Prostate gland (tissue), 2 donors: ENCODE measurements at regions of chr11 and their contacts with region 1.

Region 1: GRCh38 chr11:12288212-12288930 is 89.0 kb upstream of the PARVA start:
- DNase-seq: peak; percentile 62
- H3K4me3 ChIP-seq: no peak overlapping the region
- H3K27ac ChIP-seq: peak overlapping the region; percentile 0 to 43
- H3K4me1 ChIP-seq: no peaks in the 10 kb centered on the region
- H3K27me3 ChIP-seq: no peaks in the 10 kb centered on the region
- CTCF ChIP-seq: peak; percentile 63 to 80 (median 70)
- POLR2A ChIP-seq: no peak

Region 2: DNA sequence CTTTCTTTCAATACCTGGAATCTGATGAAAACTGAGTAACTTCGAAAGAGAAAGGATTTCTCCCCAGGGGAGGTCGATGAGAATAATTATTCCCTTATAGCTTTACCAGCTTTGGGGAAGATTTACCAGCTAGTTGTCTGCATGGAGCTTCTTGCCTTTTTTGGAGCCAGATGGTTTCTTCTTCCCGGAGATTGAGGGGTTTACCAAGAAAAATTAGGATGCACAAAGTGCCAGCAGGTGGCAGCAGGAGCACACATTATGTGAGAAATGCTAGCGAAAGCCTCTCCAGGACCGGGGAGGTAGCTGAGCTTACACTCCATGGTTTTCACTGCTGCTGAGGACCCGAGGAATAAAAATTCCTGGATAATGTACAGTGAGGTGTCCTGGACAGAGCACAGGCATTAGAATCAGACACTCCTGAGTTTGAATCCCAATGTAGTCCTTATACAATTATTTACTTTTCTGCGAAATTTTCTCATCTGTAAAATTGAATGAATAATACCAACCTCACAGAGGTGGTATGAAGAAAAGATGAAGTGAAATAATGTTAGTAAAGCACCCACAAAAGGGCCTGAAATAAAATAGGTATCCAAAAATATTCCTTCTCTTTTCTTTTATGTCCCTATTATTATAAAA is 43.0 kb after region 1 on chr11:
- intact Hi-C with region 1: loop called (anchors 5 kb)
- DNase-seq: peak; percentile 83
- H3K4me3 ChIP-seq: no peak overlapping the region
- H3K27ac ChIP-seq: no peak overlapping the region
- H3K4me1 ChIP-seq: no peaks in the 10 kb centered on the region
- H3K27me3 ChIP-seq: no peaks in the 10 kb centered on the region
- CTCF ChIP-seq: peak; percentile 41 to 90 (median 82)
- POLR2A ChIP-seq: no peak

Region 3: GRCh38 chr11:12411806-12412727 is 123.7 kb after region 1 on chr11:
- intact Hi-C with region 1: loop called (anchors 5 kb)
- DNase-seq: no peak
- H3K4me3 ChIP-seq: no peak overlapping the region
- H3K27ac ChIP-seq: peak overlapping the region; percentile 42 to 64
- H3K4me1 ChIP-seq: no peaks in the 10 kb centered on the region
- H3K27me3 ChIP-seq: no peaks in the 10 kb centered on the region
- CTCF ChIP-seq: peak; percentile 34 to 70 (median 66)
- POLR2A ChIP-seq: no peak